ENCODE measurements at regions of chr15 and their contacts with region 1.

Region 1: GRCh38 chr15:71723344-71723743 is 87.0 kb upstream of the NR2E3 start:
- DNase-seq: no peak
- ATAC-seq: no peak
- H3K4me3 ChIP-seq: no peak overlapping the region
- H3K27ac ChIP-seq: no peak overlapping the region
- H3K4me1 ChIP-seq: peaks cover 0 to 7% (median 0%) of the 10 kb centered on the region in 9 donors
- H3K27me3 ChIP-seq: no peaks in the 10 kb centered on the region
- CTCF ChIP-seq: no peak

Region 2: DNA sequence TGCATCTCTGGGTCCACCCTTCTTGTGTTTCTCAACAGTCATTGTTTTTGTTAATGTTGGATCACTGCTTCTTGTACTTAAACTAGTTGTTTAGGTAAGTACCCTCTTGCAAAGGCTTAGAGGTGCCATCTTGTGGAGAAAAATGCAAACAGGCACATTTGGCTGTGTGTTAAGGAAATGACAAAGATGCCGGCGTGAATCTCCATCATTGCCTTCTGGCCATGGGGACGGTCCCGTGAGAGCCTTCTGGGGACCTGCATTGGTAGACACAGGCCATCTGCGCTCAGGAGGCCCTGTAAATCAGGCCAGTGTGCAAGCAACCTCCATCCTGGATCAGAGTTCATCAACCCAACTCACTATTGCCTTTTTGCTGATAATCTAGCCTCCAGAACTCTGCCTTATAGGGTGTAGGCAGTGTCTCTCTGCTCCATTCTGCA is 71.6 kb before region 1 on chr15:
- intact Hi-C with region 1: loop called in 1 of 10 experiments (anchors 5 kb)
- DNase-seq: no peak
- ATAC-seq: peak in 5 of 8 donors; percentile 31 to 43 (median 35)
- H3K4me3 ChIP-seq: no peak overlapping the region
- H3K27ac ChIP-seq: peak overlapping the region in 2 of 10 donors; percentile 15 to 27
- H3K4me1 ChIP-seq: peaks cover 5 to 57% (median 26%) of the 10 kb centered on the region in 9 donors
- H3K27me3 ChIP-seq: no peaks in the 10 kb centered on the region
- CTCF ChIP-seq: peak in 8 of 9 donors; percentile 18 to 59 (median 40)

Region 3: DNA sequence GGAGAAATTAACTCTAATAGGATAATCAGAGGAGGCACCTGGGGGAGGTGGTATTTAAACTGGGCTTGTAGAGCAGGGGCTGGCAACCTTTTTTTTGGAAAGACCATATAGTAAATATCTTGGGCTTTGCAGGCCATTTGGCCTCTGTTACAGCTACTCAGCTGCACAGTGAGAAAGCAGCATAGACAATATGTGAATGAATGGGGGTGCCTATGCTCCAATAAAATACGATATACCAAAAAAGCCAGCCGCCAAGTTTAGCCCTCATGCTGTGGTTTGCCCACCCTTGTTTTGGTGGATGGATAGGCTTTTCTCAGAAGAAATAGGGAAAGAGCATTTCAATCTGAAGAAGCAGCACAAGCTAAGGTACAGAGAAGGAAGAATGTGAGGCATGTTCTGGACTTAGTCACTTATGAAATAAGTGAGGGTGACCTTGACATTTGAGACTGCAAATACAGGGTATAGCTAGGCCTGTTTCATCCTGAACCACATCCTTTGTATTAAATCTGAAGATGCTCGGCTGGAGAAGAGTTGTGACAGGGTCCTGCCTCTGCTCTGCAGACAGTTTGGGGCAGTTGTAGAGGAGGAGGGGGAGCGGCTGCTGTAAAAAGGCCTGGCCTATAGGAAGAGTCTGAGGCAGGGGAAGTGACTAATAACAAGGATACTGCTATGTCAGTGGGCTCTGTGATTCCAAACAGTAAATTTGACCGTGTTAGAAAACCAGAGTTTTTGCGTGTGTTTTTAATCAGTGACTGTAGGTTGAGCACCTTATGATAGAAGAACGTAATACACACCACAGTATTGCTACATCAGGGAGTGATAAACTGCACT is 43.9 kb before region 1 on chr15:
- intact Hi-C with region 1: loop called in 1 of 10 experiments (anchors 5 kb)
- DNase-seq: no peak
- ATAC-seq: peak in 2 of 8 donors; percentile 2 to 30
- H3K4me3 ChIP-seq: no peak overlapping the region
- H3K27ac ChIP-seq: peak overlapping the region; percentile 14 to 79 (median 64)
- H3K4me1 ChIP-seq: peaks cover 10 to 69% (median 37%) of the 10 kb centered on the region in 9 donors
- H3K27me3 ChIP-seq: no peaks in the 10 kb centered on the region
- CTCF ChIP-seq: no peak